ENCODE measurements at regions of chr13 and their contacts with region 1.

Region 1: GRCh38 chr13:42110410-42111155 is 62.1 kb downstream of the DGKH start:
- DNase-seq: peak; percentile 54
- ATAC-seq: peak; percentile 44; the same call in 2 of the 3 replicates
- H3K4me3 ChIP-seq: no peak overlapping the region
- H3K27ac ChIP-seq: no peak overlapping the region
- H3K4me1 ChIP-seq: no peaks in the 10 kb centered on the region
- H3K27me3 ChIP-seq: no peaks in the 10 kb centered on the region; a peak in 3 of 5 replicates
- CTCF ChIP-seq: peak; percentile 80
- EP300 ChIP-seq: no peak
- POLR2A ChIP-seq: no peak
- RAD21 ChIP-seq: no peak; the same call in 1 of the 2 replicates

Region 2: DNA sequence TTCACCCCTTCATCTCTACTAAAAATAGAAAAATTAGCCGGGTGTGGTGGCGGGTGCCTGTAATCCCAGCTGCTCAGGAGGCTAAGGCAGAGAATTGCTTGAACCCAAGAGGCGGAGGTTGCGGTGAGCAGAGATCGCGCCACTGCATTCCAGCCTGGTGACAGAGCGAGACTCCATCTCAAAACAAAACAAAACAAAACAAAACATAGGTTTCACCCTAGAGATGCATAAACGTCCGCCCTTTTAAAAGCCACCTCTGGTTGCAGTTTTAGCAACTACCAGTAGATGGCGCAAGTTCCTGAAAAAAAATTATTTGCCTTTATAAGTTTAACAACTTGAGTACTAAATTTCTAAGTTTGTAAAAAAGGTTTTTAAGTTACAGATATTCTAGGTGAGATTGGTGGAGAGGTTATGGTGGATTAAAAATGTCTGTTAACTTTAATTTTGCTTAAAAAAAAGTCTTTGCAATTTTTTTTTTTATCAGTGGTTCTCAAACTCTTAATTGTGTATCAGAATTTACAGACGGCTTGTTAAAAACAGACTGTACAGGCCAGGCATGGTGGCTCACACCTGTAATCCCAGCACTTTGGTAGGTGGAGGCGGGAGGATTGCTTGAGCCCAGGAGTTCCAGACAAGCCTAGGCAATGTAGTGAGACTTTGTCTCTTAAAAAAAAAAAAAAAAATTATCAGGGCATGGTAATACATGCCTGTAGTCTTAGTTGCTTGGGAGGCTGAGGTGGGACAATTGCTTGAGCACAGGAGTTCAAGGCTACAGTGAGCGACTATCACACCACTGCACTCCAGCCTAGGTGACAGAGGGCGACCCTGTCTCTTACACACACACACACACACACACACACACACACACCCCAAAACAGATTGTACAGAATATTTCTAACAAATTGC is 757.4 kb before region 1 on chr13:
- CTCF ChIA-PET with region 1: no interaction called
- POLR2A ChIA-PET with region 1: no interaction called
- in situ Hi-C with region 1: no loop called
- intact Hi-C with region 1: loop called (anchors 5 kb)
- DNase-seq: peak; percentile 35
- ATAC-seq: peak; percentile 65
- H3K4me3 ChIP-seq: no peak overlapping the region
- H3K27ac ChIP-seq: no peak overlapping the region
- H3K4me1 ChIP-seq: peaks cover 20% of the 10 kb centered on the region
- H3K27me3 ChIP-seq: no peaks in the 10 kb centered on the region
- CTCF ChIP-seq: peak; percentile 56
- EP300 ChIP-seq: no peak
- POLR2A ChIP-seq: no peak
- RAD21 ChIP-seq: no peak

Region 3: GRCh38 chr13:41411522-41411921 is 699.1 kb before region 1 on chr13:
- CTCF ChIA-PET with region 1: no interaction called
- POLR2A ChIA-PET with region 1: no interaction called
- in situ Hi-C with region 1: loop called (anchors 25 kb)
- intact Hi-C with region 1: loop called (anchors 5 kb)
- DNase-seq: peak; percentile 62
- ATAC-seq: peak; percentile 96
- H3K4me3 ChIP-seq: no peak overlapping the region
- H3K27ac ChIP-seq: no peak overlapping the region
- H3K4me1 ChIP-seq: peaks cover 12% of the 10 kb centered on the region
- H3K27me3 ChIP-seq: no peaks in the 10 kb centered on the region
- CTCF ChIP-seq: peak; percentile 78
- EP300 ChIP-seq: no peak
- POLR2A ChIP-seq: no peak
- RAD21 ChIP-seq: peak; percentile 65

Region 4: GRCh38 chr13:41668130-41668757 is 442.3 kb before region 1 on chr13:
- CTCF ChIA-PET with region 1: interaction called, 28 read pairs
- POLR2A ChIA-PET with region 1: no interaction called
- in situ Hi-C with region 1: loop called (anchors 5 kb)
- intact Hi-C with region 1: loop called (anchors 1 kb)
- DNase-seq: peak; percentile 96
- ATAC-seq: peak; percentile 100
- H3K4me3 ChIP-seq: no peak overlapping the region
- H3K27ac ChIP-seq: peak overlapping the region; percentile 36
- H3K4me1 ChIP-seq: peaks cover 15% of the 10 kb centered on the region
- H3K27me3 ChIP-seq: no peaks in the 10 kb centered on the region
- CTCF ChIP-seq: peak; percentile 88
- EP300 ChIP-seq: peak in 1 of 2 experiments; percentile 56; a peak in 2 of 4 replicates
- POLR2A ChIP-seq: no peak
- RAD21 ChIP-seq: peak; percentile 71

Region 5: GRCh38 chr13:41905600-41906254 is 204.9 kb before region 1 on chr13:
- CTCF ChIA-PET with region 1: interaction called, 6 read pairs
- POLR2A ChIA-PET with region 1: no interaction called
- in situ Hi-C with region 1: no loop called
- intact Hi-C with region 1: loop called (anchors 1 kb)
- DNase-seq: peak; percentile 28
- ATAC-seq: peak; percentile 93
- H3K4me3 ChIP-seq: no peak overlapping the region
- H3K27ac ChIP-seq: no peak overlapping the region
- H3K4me1 ChIP-seq: peaks cover 9% of the 10 kb centered on the region
- H3K27me3 ChIP-seq: no peaks in the 10 kb centered on the region
- CTCF ChIP-seq: peak; percentile 40
- EP300 ChIP-seq: no peak
- POLR2A ChIP-seq: no peak
- RAD21 ChIP-seq: no peak

Measured in HepG2 (cell line).